Activated CD4-positive, alpha-beta memory T cell treated with anti-CD3 and anti-CD28 coated beads for 36 hours (primary cell): ENCODE measurements at regions of chr5 and their contacts with region 1.

Region 1: DNA sequence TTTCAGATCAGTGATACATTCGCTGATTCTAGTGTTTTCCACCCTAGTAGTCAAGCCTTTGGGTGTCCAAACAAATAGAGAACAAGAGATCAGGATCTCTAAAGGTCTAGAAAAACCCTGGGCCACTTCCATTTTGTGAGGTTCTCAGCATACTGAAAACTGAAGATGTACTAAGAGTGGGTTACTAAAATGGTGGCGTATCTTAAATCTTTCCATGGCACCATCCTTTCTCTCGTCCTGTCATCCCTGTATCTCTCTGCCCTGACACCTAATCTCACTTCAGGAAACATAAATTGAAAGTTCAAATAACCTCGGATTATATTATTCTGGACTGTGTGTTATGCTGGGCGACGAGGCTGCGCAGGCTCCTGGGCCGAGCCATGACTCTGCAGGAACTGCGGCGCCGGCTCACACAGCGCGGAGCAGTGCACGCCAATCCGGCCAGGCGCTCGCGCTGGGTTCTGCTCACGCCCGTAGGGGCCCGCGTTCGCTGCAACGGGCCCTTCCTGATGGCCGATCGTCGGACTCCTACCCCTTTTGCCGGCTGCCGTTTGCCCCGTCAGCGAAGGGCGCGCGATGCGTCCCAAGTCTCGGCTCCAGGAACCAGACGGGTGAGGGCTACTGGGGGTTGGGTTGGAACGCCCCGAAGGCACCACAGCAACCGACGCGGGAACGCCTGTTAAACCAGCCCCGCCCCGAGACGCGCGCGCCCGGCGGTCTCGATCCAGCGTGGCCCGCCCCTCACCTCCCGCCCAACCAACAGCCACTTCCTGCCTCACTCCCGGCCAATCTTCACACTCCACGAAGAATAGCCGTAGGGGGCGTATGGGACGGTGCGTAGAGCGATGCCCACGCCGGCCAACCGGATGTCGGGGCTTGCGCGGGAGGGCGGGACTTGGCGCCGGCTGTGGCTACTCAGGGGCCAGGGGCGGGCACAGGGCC is 503 bp upstream of the CANX start:
- DNase-seq: peak; percentile 100
- H3K4me3 Mint-ChIP-seq: peak overlapping the region; percentile 97
- H3K27ac Mint-ChIP-seq: peak overlapping the region; percentile 98
- H3K4me1 Mint-ChIP-seq: peaks cover 35% of the 10 kb centered on the region
- H3K27me3 Mint-ChIP-seq: no peaks in the 10 kb centered on the region

Region 2: DNA sequence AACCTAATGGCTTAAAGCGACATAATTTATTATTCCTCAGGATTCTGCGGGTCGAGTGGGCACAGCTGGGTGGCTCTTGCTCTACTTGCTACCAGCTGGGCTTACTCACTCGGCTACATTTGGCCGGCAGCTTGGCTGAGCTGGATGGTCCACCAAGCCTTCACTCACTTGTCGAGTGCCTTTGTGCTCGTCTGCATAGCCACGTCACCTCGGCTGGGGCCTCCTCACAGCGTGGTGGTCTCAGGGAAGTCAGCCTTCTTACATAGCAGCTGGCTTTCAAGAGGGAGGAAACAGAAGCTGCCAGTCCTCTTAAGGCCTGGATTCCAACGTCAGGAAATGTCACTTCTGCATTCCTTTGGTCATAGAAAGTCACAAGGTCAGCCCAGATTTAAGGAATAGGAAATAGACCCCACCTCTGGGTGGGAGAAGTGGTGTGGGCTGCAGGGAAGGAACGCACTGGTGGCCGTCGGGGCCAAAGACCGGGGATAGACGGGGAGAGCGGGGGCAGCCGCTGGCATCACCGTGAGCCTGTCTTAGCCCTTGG is 223.0 kb before region 1 on chr5:
- CTCF ChIA-PET with region 1: no interaction called
- POLR2A ChIA-PET with region 1: no interaction called
- intact Hi-C with region 1: no loop called
- DNase-seq: no peak
- H3K4me3 Mint-ChIP-seq: no peak overlapping the region
- H3K27ac Mint-ChIP-seq: no peak overlapping the region
- H3K4me1 Mint-ChIP-seq: no peaks in the 10 kb centered on the region
- H3K27me3 Mint-ChIP-seq: peaks cover 2% of the 10 kb centered on the region

Region 3: DNA sequence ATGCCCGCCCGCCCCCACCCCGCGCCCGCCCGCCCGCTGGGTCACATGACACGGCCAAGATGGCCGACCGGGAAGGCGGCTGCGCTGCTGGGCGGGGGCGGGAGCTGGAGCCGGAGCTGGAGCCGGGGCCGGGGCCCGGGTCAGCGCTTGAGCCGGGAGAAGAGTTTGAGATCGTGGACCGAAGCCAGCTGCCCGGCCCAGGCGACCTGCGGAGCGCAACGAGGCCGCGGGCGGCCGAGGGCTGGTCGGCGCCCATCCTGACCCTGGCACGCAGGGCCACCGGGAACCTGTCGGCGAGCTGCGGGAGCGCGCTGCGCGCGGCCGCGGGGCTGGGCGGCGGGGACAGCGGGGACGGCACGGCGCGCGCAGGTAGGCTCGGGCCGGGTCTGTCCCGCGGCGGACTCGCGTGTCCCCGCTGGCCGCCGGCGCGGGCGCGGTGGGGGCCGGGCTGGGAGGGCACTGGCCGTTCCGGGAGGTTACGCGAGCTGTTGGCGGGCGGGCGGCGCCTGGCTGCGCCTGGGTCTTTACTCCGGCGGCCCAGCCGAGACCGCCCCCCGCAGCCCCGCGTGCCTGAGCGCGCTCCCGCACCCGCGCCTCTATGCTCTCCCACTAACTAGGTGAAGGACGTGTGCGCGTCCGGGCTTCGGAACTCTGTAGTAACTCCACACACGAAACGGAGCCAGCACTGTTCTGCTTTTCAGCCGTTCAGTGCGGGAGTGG is 147.6 kb before region 1 on chr5 and contains the start of gene RUFY1:
- CTCF ChIA-PET with region 1: no interaction called
- POLR2A ChIA-PET with region 1: no interaction called
- intact Hi-C with region 1: loop called (anchors 2 kb)
- DNase-seq: peak; percentile 87
- H3K4me3 Mint-ChIP-seq: peak within 1 kb of the TSS; percentile 98
- H3K27ac Mint-ChIP-seq: peak within 1 kb of the TSS; percentile 99
- H3K4me1 Mint-ChIP-seq: peaks cover 36% of the 10 kb centered on the region
- H3K27me3 Mint-ChIP-seq: no peaks in the 10 kb centered on the region
- total RNA-seq, gene RUFY1: 30.3 to 34.0 TPM

Region 4: DNA sequence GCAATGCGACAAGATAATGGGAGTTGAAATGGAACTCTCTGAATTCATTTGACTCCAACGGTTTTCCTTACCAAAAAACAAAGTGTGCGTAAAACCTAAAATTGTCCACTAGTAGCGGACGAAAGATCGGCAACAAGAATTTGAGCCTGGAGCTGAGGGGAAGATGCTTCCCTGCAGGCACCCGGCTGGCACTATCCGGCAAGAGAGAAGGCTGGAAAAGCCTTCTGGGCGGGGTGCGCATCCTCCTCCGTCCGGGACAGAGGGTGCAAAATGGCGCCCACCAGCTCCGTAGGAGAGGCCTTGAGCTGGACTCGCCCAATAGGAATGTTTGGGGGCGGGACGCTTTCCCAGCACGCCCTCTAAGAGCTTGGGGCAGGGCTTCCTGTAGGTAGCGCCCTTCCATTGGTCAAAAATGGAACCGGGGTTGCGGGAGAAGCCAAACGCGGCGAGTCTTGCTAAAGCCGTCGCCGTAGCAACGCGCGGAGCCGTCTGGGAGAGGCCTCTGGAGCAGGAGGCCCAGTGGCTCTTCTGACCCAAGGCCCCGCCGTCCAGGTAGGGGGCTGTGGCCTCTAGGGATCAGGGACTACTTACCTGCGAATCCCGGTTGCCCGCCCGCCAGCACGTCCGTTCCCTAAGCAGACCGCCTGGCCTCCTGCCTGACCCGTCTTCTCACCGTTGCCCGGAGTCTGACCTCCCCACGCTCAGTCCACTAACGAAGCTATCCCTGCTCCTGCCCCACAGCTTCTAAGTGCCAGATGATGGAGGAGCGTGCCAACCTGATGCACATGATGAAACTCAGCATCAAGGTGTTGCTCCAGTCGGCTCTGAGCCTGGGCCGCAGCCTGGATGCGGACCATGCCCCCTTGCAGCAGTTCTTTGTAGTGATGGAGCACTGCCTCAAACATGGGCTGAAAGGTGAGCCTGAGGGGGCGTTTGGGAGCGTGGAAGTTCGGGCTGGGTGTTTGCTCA is 138.7 kb before region 1 on chr5:
- CTCF ChIA-PET with region 1: no interaction called
- POLR2A ChIA-PET with region 1: no interaction called
- intact Hi-C with region 1: loop called (anchors 1 kb)
- DNase-seq: peak; percentile 97
- H3K4me3 Mint-ChIP-seq: peak overlapping the region; percentile 85
- H3K27ac Mint-ChIP-seq: peak overlapping the region; percentile 86
- H3K4me1 Mint-ChIP-seq: peaks cover 17% of the 10 kb centered on the region
- H3K27me3 Mint-ChIP-seq: no peaks in the 10 kb centered on the region

Region 5: GRCh38 chr5:179648410-179648809 is 49.9 kb before region 1 on chr5:
- CTCF ChIA-PET with region 1: no interaction called
- POLR2A ChIA-PET with region 1: no interaction called
- intact Hi-C with region 1: no loop called
- DNase-seq: no peak
- H3K4me3 Mint-ChIP-seq: no peak overlapping the region
- H3K27ac Mint-ChIP-seq: no peak overlapping the region
- H3K4me1 Mint-ChIP-seq: no peaks in the 10 kb centered on the region
- H3K27me3 Mint-ChIP-seq: peaks cover 4% of the 10 kb centered on the region

Region 6: GRCh38 chr5:179678223-179679013 is 19.8 kb before region 1 on chr5:
- CTCF ChIA-PET with region 1: interaction called, 12 read pairs
- POLR2A ChIA-PET with region 1: interaction called, 21 read pairs
- intact Hi-C with region 1: loop called (anchors 1 kb)
- DNase-seq: peak; percentile 96
- H3K4me3 Mint-ChIP-seq: peak overlapping the region; percentile 94
- H3K27ac Mint-ChIP-seq: peak overlapping the region; percentile 93
- H3K4me1 Mint-ChIP-seq: peaks cover 24% of the 10 kb centered on the region
- H3K27me3 Mint-ChIP-seq: no peaks in the 10 kb centered on the region

Region 7: DNA sequence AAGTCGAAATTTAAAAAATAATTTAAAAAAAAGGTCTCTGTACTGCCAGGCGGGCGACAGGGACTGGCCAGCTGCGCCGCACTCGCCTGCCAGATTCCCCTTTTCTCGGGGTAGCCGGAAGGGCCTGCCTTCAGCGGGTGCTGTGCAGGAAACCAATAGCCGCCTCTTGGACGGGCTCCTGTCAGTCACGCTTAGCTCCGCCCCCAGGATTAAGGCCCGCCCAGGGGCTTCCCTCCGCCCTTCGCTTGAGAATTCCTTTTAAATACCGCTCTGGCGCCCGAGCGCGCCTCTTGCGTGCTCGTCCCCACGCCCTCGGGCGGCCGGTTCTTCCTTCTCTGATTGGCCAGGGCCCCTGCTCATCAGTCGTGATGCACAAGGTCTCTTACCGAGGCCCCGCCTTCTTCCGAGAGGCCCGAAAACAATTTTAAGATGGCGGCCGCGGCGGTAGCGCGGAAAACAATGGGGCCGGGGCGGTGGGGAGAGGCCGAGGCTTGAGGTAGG is 34.2 kb after region 1 on chr5 and contains the start of gene MAML1:
- CTCF ChIA-PET with region 1: interaction called, 4 read pairs
- POLR2A ChIA-PET with region 1: interaction called, 18 read pairs
- intact Hi-C with region 1: loop called (anchors 1 kb)
- DNase-seq: peak; percentile 100
- H3K4me3 Mint-ChIP-seq: peak within 1 kb of the TSS; percentile 98
- H3K27ac Mint-ChIP-seq: peak within 1 kb of the TSS; percentile 92
- H3K4me1 Mint-ChIP-seq: peaks cover 42% of the 10 kb centered on the region
- H3K27me3 Mint-ChIP-seq: no peaks in the 10 kb centered on the region
- total RNA-seq, gene MAML1: 20.3 to 22.2 TPM

Region 8: DNA sequence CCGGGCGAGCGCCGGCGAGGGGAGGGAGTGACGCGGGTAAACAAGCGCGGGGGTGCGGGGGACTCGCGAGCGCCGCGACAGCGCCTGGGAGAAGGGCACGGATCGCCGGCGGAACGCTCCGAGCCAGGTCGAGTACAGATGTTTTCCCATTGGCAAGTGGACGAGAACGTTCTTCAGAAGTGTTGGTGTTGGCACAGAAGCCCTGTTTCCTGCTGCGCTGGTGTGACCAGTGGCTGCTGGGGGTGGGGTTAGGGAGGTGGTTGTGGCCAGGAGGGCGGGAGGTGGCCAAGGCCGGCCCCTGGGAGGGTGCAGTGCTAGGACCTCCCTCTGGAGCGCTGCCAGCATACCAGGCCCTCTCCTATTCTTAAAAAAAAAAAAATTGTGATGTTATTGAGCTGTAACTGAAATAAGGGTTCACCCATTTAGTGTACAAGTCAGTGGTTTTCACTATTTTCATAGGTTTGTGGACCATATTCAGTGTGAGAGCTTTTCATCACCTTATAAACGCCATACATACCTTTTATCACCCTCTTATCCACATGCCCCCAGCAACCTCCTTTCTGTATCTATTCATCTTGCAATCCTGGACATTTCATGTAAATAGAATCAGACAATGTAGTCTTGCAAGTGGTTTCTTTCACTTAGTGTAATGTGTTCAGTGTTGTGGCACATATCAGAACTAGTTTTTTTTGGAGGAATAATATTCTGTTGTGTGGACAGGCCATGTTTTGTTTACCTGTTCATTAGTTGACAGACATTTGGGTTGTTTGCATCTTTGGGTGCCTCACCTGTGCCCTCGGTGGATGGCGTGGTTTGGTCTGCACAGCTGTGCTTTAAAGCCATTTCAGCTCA is 123.5 kb after region 1 on chr5:
- CTCF ChIA-PET with region 1: no interaction called
- POLR2A ChIA-PET with region 1: interaction called, 3 read pairs
- intact Hi-C with region 1: loop called (anchors 1 kb)
- DNase-seq: peak; percentile 92
- H3K4me3 Mint-ChIP-seq: peak overlapping the region; percentile 90
- H3K27ac Mint-ChIP-seq: peak overlapping the region; percentile 95
- H3K4me1 Mint-ChIP-seq: peaks cover 49% of the 10 kb centered on the region
- H3K27me3 Mint-ChIP-seq: no peaks in the 10 kb centered on the region

Region 9: DNA sequence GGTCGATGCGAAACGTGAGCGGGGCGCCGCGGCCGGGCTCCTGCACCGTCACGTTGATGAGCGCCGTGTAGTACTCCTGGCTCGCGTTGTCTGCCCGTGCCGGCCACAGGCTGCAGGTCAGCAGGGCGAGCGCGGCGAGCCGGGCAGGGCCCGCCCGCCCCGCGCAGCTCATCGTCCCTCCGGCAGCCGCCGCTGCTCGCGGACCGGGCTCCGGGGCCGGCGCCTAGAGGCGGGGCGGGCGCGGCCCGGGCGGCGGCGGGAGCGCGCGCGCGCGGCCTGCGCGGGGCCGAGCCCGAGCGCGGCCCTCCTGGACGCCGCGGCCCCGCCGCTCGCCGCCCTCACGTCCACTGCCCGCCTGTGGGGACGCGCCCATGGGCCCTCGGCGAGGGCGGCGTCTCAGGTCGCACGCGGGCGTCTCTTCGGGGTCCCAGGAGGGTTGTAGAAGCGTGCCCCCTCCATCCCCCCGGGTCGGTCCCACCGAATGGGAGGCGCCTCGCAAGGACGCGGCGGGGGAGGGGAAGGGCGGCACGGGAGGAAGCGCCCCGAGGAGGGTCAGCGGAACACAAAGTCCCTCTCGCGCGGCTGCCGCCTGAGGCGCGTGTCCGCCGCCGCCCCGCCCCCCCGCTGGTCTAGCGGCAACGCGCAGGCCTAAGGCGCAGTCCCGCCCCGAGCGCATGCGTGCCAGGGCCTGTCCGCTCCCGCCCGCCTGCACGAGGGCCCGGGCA is 373.4 kb after region 1 on chr5 and contains the start of gene RNF130:
- CTCF ChIA-PET with region 1: no interaction called
- POLR2A ChIA-PET with region 1: no interaction called
- intact Hi-C with region 1: loop called (anchors 1 kb)
- DNase-seq: peak; percentile 91
- H3K4me3 Mint-ChIP-seq: peak within 1 kb of the TSS; percentile 78
- H3K27ac Mint-ChIP-seq: peak within 1 kb of the TSS; percentile 63
- H3K4me1 Mint-ChIP-seq: peaks cover 29% of the 10 kb centered on the region
- H3K27me3 Mint-ChIP-seq: peaks cover 2% of the 10 kb centered on the region
- total RNA-seq, gene RNF130: 9.9 to 10.1 TPM